ENCODE measurements at regions of chr22 and their contacts with region 1.

Region 1: DNA sequence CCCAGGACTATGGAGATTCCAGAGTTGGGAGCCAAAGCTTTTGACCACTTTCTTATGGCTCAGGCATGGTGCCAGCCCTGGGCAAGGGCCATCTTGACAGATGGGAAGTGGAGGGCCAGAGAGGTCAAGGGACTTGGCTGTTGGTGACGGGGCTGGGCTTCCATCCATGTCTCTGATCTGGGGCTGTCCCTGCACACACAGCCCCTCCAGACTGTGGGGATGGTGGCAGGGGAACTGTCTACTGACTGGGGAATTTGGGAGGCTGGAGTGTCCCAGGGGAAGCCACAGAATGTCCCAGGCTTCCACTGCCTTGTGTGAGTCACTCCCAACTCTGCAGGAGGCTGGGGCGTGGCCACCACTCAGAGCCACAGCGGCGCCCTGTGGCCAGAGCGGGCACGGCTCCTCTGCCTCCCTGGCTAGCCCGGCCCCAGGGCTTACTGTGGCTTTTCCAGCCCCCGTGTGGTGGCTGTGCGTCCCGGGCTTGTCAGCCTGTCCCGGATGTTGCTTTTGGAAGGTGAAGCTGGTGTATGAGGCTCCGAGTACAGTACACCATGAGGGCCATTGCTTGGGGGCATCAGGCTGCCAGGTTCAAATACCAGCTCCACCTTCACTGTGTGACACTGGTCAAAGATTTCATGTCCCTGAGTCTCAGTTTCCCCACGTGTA is 19.6 kb downstream of the C22orf23 start:
- DNase-seq: peak; percentile 84 to 87
- ATAC-seq: peak; percentile 89 to 96
- H3K4me3 ChIP-seq: no peak overlapping the region
- H3K27ac ChIP-seq: peak overlapping the region; percentile 40 to 78; a peak in 4 of 6 replicates
- H3K4me1 ChIP-seq: peaks cover 14% of the 10 kb centered on the region
- CTCF ChIP-seq: peak; percentile 78
- EP300 ChIP-seq: no peak
- POLR2A ChIP-seq: no peak
- RAD21 ChIP-seq: peak; percentile 46 to 57

Region 2: GRCh38 chr22:37887610-37888378 is 46.0 kb before region 1 on chr22:
- CTCF ChIA-PET with region 1: interaction called, 15 read pairs
- POLR2A ChIA-PET with region 1: no interaction called
- DNase-seq: peak in 1 of 2 experiments; percentile 36
- ATAC-seq: peak; percentile 71 to 83; a peak in 3 of 6 replicates
- H3K4me3 ChIP-seq: no peak overlapping the region
- H3K27ac ChIP-seq: no peak overlapping the region
- H3K4me1 ChIP-seq: no peaks in the 10 kb centered on the region
- CTCF ChIP-seq: peak; percentile 20; the same call in 1 of the 3 replicates
- EP300 ChIP-seq: no peak
- POLR2A ChIP-seq: no peak
- RAD21 ChIP-seq: peak; percentile 12 to 21; a peak in 1 of 5 replicates

Region 3: DNA sequence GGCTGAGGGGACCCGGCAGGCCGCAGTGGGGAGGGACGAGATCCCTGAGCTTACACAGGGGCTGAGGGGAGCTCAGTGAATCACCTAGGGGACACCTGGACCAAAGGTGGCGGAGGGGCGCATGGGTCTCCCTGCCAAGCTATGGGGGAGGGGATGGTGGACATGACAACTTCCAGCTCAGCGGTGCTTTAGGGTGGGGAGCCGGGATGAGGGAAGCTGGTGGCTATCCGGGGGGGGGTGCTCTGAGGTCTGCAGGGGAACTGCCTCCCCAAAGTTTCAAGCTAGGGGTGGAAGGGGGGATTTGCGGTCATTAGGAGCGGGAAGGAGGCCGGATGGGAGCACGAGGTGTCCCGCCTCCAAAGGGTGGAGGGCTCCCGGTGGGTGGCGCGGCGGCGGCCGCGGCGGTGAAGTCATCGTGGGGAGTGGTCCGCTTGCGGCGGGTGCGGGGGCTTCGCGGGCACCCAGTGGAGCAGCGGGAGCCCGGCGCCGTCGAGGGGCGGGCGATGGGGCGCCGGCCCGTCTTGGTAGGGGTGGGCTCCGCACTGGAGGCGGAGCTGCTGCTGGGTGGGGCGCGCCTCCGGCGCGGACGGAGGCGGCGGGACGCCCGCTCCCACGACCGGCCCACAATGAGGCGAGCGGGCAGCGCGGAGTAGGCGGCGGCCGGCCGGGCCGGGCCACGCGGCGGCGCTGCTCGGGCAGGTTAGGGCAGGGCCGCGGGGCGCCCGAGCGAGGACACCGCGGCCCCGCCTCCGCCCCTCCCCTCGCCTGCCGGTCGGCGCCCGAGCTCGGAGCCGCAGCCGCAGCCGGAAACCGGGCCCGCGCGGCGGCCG is 28.1 kb before region 1 on chr22 and contains the start of gene MICALL1:
- CTCF ChIA-PET with region 1: interaction called, 20 read pairs
- POLR2A ChIA-PET with region 1: interaction called, 9 read pairs
- DNase-seq: peak; percentile 51 to 64
- ATAC-seq: peak; percentile 79 to 84
- H3K4me3 ChIP-seq: peak within 1 kb of the TSS; percentile 95
- H3K27ac ChIP-seq: peak within 1 kb of the TSS; percentile 99
- H3K4me1 ChIP-seq: peaks cover 28% of the 10 kb centered on the region
- CTCF ChIP-seq: peak; percentile 52
- EP300 ChIP-seq: no peak
- POLR2A ChIP-seq: peak; percentile 28; the same call in 1 of the 2 replicates
- RAD21 ChIP-seq: no peak; a peak in 1 of 5 replicates
- polyA plus RNA-seq, gene MICALL1: 10.4 and 11.1 TPM in 2 replicates

Region 4: GRCh38 chr22:37910890-37911743 is 22.7 kb before region 1 on chr22:
- CTCF ChIA-PET with region 1: interaction called, 20 read pairs
- POLR2A ChIA-PET with region 1: interaction called, 9 read pairs
- DNase-seq: no peak
- ATAC-seq: no peak
- H3K4me3 ChIP-seq: no peak overlapping the region
- H3K27ac ChIP-seq: no peak overlapping the region
- H3K4me1 ChIP-seq: peaks cover 12% of the 10 kb centered on the region; the same call in 2 of the 3 replicates
- CTCF ChIP-seq: no peak
- EP300 ChIP-seq: no peak
- POLR2A ChIP-seq: no peak
- RAD21 ChIP-seq: no peak

Region 5: DNA sequence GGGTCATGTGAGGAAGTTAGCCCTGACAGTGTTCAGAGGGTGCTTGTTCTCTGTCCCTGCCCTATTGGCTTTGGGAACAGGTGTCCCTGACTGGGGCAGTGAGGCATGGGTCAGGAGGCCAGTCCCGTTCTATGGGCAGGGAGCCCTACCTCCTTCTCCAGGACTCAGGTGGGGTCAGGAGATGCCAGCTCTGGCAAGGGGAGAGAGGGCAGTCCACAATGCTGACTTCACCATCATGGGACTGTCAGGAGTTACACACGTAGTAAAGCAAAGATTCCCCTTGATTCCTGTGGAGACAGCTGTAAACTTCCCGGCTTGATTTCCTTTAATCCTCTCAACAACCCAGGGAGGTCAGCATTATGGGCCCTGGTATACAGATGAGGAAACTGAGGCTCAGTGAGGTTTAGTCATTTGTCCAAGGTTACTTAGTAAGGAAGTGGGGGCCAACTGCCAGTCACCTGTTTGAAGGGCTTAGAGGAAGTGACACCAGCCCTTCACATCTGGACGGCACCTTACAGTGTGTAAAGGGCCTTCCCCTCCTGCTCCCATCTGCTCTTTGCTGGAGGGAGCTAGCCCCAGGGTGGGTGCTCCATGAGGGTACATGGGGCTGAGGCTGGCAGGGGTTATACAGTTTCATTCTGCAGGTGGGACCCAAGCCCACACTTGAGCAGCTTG is 15.8 kb before region 1 on chr22:
- CTCF ChIA-PET with region 1: interaction called, 14 read pairs
- POLR2A ChIA-PET with region 1: no interaction called
- DNase-seq: no peak
- ATAC-seq: no peak
- H3K4me3 ChIP-seq: no peak overlapping the region
- H3K27ac ChIP-seq: no peak overlapping the region
- H3K4me1 ChIP-seq: no peaks in the 10 kb centered on the region
- CTCF ChIP-seq: no peak
- EP300 ChIP-seq: no peak
- POLR2A ChIP-seq: no peak
- RAD21 ChIP-seq: no peak

Region 6: DNA sequence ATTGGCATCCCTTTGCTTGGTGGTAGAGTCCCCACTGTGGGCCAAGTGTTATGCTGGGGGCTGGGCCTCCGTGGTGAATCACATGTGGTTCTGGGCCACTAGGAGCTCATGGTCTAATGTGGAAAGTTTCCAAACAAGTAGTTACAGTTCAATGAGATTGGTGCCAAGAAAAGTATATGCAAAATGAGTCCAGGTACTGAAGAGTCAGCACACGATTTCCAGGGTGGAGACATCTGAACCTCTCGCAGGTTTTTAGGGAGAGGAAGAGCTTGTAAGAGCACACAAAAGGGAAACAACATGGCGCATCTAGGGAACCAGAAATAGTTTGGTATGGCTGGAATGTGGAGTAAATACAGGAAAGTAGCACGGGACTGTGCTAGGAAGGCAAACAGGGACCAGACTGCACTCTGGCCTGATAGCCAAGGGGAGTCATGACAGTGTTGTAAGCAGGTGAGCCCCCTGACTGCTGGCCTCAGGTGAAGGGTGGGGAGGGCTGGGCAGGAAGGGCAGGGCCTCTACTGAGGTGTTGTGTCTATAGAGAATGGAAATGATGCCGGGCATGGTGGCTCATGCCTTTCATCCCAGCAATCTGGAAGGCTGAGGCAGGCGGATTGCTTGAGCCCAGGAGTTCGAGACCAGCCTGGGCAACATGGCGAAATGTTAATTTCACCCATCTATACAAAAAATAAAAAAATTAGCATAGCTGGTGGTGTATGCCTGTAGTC is 32.3 kb after region 1 on chr22:
- CTCF ChIA-PET with region 1: interaction called, 12 read pairs
- POLR2A ChIA-PET with region 1: no interaction called
- DNase-seq: no peak
- ATAC-seq: no peak
- H3K4me3 ChIP-seq: no peak overlapping the region
- H3K27ac ChIP-seq: no peak overlapping the region
- H3K4me1 ChIP-seq: no peaks in the 10 kb centered on the region
- CTCF ChIP-seq: no peak
- EP300 ChIP-seq: no peak
- POLR2A ChIP-seq: no peak
- RAD21 ChIP-seq: no peak

Measured in A549 (cell line).